ENCODE measurements at regions of chr10 and their contacts with region 1.

Region 1: GRCh38 chr10:101214446-101215396 is 14.5 kb downstream of the LBX1 start:
- DNase-seq: no peak
- H3K4me3 ChIP-seq: no peak overlapping the region
- H3K27ac ChIP-seq: no peak overlapping the region
- H3K4me1 ChIP-seq: peaks cover 42% of the 10 kb centered on the region
- H3K27me3 ChIP-seq: peaks cover 40% of the 10 kb centered on the region
- CTCF ChIP-seq: peak; percentile 47 to 82 (median 66)
- POLR2A ChIP-seq: no peak

Region 2: GRCh38 chr10:101189541-101190401 is 24.9 kb before region 1 on chr10:
- intact Hi-C with region 1: no loop called
- DNase-seq: no peak
- H3K4me3 ChIP-seq: no peak overlapping the region
- H3K27ac ChIP-seq: no peak overlapping the region
- H3K4me1 ChIP-seq: no peaks in the 10 kb centered on the region
- H3K27me3 ChIP-seq: no peaks in the 10 kb centered on the region
- CTCF ChIP-seq: no peak
- POLR2A ChIP-seq: no peak

Region 3: GRCh38 chr10:101569838-101570766 is 355.4 kb after region 1 on chr10:
- intact Hi-C with region 1: loop called (anchors 5 kb)
- DNase-seq: no peak
- H3K4me3 ChIP-seq: peak overlapping the region; percentile 44 to 53
- H3K27ac ChIP-seq: peak overlapping the region; percentile 4
- H3K4me1 ChIP-seq: peaks cover 24% of the 10 kb centered on the region
- H3K27me3 ChIP-seq: peaks cover 10% of the 10 kb centered on the region
- CTCF ChIP-seq: peak; percentile 43 to 96 (median 57)
- POLR2A ChIP-seq: peak in 1 of 2 donors; percentile 3